Cardiac septum (tissue), 1 donor: ENCODE measurements at regions of chr2 and their contacts with region 1.

Region 1: GRCh38 chr2:134118279-134119116 is 135.4 kb upstream of the MGAT5 start:
- DNase-seq: peak; percentile 89

Region 2: GRCh38 chr2:133900890-133901289 is 217.6 kb before region 1 on chr2:
- intact Hi-C with region 1: no loop called
- DNase-seq: no peak

Region 3: GRCh38 chr2:134137182-134137611 is 18.7 kb after region 1 on chr2:
- intact Hi-C with region 1: loop called (anchors 1 kb)
- DNase-seq: peak; percentile 83

Region 4: DNA sequence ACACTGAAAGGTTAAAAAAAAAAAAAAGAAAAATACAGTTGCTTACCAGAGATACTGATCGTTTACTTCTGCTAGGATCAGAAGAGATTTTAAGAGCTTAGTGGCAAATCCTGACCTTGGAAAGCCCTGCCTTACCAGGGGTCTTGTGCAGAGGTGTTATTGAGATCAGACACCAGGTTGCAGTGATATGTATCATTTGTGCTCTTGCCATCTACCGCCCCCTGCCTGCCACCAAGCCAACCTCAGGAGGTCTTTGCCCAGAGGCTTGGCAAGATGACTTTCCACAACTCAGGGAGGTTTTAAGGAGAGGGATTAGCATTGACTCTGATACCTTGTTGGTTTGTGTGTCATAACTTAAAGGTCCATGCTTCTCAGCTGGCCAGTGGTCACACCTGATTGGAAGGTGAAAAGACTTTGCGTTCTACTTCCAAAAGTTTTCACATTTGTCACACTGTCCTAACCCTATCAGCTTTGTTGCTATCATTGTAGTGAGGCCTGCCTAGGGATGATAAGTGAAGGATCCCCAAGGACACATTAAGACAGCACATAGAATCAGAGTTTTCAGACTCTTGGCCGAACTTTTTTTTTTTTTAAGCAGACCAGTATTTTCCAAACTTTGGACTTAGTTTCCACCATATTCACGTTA is 89.2 kb after region 1 on chr2:
- intact Hi-C with region 1: loop called (anchors 1 kb)
- DNase-seq: peak; percentile 83

Region 5: GRCh38 chr2:134261398-134262131 is 143.1 kb after region 1 on chr2:
- intact Hi-C with region 1: loop called (anchors 2 kb)
- DNase-seq: no peak

Region 6: DNA sequence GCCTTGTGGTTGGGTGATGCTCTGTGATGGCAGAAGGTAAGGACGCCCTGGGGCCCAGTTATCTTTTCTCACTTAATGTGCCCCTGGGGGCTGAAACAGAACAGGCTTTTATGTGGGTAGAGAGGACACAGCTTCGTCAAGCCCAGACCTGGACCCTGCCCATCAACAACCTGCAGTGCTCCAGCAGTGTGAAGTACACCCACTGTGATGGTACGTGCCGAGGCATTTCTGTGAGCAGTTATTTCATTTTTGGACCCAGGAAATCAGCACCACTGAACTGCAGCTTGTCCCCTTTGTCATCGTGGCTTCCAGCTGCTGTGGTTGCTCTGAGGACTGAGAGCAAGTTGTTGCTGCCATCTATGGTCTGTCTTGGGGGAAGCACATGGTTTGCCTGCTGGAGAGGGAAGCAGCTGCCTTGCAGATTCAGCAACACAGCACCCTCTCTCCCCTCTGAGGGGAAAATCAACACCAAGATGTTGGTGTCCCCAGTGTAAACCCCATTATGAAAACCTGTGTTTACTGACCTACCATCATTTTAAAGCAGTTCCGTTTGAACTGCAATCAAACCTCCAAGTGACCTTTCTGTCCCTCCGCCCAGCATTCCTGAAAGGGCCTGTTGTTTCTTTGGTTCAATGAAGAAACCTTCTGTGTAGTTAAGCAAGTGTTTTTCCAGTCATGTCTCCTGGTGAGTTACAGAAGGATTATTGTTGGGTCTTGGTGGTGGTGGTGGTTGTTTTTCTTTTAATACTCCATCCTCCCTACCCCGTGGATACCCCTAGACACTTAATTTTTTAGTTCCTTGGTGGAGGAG is 293.5 kb after region 1 on chr2:
- intact Hi-C with region 1: loop called (anchors 2 kb)
- DNase-seq: peak; percentile 83

Region 7: GRCh38 chr2:134918526-134919340 is 800.2 kb after region 1 on chr2 and contains the start of gene CCNT2:
- intact Hi-C with region 1: loop called (anchors 5 kb)
- DNase-seq: peak; percentile 100
- total RNA-seq, gene CCNT2: 24.1 TPM